Calu3 (cell line): ENCODE measurements at regions of chr1 and their contacts with region 1.

Region 1: DNA sequence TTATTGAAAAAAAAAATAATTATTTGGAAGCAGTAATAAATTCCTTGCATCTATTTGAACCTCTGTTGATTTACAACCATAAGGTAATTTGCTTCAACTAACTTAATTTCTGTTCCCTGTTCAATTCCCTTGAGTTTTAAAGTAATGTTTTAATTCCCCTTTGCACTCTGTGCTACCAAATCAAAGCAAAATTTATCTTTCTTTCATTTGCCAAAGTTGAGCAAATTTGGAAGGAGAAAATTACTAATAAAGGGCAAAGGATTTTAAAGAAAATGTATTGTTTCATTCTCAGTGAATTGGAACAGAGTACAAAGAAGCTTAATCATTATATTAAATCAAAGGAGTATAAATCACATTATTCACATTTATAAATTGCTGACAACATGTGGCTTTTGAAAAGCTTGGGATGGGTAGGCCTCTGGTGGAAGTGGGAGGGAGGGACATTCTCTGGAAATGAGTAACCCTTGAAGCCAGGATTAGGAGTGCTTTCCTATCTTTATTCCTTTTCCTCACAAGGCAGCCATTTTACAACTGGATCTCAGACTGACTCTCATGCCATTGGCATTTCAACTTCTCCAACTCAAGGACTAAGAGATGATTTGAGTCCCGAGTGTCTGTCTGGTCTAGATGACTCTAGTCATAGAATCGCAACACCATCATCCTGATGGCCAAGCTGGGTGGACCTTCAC is 331.6 kb upstream of the DUSP10 start:
- DNase-seq: no peak
- H3K4me3 Mint-ChIP-seq: no peak overlapping the region
- H3K27ac Mint-ChIP-seq: no peak overlapping the region
- H3K4me1 Mint-ChIP-seq: no peaks in the 10 kb centered on the region
- H3K27me3 Mint-ChIP-seq: no peaks in the 10 kb centered on the region
- CTCF ChIP-seq: no peak

Region 2: GRCh38 chr1:222195857-222196256 is 122.4 kb after region 1 on chr1:
- CTCF ChIA-PET with region 1: interaction called, 12 read pairs
- intact Hi-C with region 1: no loop called
- DNase-seq: no peak
- H3K4me3 Mint-ChIP-seq: no peak overlapping the region
- H3K27ac Mint-ChIP-seq: no peak overlapping the region
- H3K4me1 Mint-ChIP-seq: no peaks in the 10 kb centered on the region
- H3K27me3 Mint-ChIP-seq: peaks cover 24% of the 10 kb centered on the region
- CTCF ChIP-seq: no peak